Activated CD4-positive, alpha-beta memory T cell treated with anti-CD3 and anti-CD28 coated beads, Interleukin-2, amount 10 ng/mL, durations not matched to agents 7 days and 5 days (primary cell): ENCODE measurements at regions of chrX and their contacts with region 1.

Region 1: DNA sequence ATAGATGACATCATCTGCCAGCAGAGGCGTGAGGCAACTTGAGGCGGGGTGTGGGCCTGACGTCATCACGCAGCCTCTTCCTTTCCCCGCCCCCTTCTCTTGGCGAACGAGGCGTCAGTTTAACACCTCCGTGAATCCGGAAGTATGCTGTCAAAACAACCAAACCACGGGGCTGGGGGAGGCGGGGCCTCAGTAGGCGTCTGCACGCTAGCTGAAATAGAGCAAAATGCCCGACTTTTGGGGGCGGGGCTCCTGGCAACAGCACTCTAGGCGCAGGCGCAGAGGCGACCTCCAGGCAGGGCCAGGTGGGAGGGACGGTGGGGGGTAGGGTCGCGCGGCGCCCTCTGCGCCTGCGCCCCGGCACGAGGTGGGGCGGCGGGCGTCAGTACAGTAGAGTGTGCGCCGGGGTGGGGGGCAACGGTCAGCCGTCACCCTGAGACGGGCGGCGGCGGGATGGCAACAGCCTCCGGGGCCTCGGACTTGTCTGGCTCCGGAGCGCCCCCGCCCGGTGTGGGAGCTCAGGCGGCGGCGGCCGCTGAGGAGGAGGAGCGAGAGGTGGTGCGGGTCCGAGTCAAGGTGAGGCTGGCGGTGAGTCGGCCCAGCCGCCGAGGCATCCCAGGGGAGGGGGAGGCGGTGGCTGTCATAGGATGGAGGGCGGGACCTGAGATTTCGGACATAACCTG is at the start of gene TBC1D25:
- DNase-seq: peak; percentile 97
- H3K4me3 Mint-ChIP-seq: peak within 1 kb of the TSS; percentile 93
- H3K27ac Mint-ChIP-seq: peak within 1 kb of the TSS; percentile 95
- H3K4me1 Mint-ChIP-seq: peaks cover 29% of the 10 kb centered on the region
- H3K27me3 Mint-ChIP-seq: no peaks in the 10 kb centered on the region
- total RNA-seq, gene TBC1D25: 21.7 to 22.3 TPM

Region 2: DNA sequence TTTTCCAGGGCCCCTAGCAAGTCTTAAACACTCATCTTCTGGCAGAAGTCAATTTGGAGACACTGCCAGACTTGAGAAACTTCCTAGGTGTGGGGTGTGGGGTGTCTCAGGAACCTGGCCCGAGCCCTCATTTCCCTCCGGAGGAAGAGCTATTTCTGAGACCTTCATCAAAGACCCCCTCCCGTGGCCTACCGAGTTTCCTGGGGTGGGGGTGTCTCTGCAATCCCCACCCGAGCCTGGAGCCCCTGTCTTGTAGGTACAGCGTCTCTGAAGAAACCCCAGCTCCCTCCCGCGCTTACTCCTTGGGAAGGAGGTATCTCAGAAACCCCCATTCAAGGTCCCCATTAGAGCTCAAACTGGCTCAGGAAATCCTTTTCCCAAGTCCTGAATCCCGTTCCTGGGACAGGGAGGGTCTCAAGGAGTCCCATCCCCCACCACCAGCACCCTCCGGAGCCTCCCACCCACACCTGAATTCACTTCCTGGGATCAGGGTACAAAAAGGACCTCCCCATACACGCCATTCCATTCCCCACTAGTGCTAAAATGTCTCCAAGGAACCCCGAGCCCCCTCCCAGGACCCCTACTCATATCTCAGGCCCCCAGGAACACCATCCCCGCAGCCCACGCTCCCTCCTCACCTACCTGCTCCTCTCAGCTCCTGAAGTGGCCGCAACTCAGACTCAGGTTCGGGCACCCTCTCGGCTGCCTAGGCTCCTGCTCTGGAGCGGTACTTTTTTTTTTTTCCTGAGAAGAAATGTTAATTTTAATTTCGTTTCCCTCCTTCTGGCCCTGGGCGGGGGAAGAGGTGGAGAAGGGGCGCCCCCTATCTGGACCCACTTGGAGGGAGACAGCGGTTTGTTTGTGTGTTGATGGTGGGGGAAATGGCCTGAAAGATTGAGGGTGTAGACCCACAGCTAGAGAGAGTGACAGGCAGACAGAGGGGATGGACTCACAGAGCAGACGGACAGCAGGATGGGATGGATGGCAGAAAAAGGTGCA is 70.5 kb before region 1 on chrX:
- CTCF ChIA-PET with region 1: interaction called, 18 read pairs
- POLR2A ChIA-PET with region 1: interaction called, 12 read pairs
- DNase-seq: peak; percentile 52
- H3K4me3 Mint-ChIP-seq: peak overlapping the region; percentile 96
- H3K27ac Mint-ChIP-seq: peak overlapping the region; percentile 90
- H3K4me1 Mint-ChIP-seq: peaks cover 44% of the 10 kb centered on the region
- H3K27me3 Mint-ChIP-seq: no peaks in the 10 kb centered on the region

Region 3: DNA sequence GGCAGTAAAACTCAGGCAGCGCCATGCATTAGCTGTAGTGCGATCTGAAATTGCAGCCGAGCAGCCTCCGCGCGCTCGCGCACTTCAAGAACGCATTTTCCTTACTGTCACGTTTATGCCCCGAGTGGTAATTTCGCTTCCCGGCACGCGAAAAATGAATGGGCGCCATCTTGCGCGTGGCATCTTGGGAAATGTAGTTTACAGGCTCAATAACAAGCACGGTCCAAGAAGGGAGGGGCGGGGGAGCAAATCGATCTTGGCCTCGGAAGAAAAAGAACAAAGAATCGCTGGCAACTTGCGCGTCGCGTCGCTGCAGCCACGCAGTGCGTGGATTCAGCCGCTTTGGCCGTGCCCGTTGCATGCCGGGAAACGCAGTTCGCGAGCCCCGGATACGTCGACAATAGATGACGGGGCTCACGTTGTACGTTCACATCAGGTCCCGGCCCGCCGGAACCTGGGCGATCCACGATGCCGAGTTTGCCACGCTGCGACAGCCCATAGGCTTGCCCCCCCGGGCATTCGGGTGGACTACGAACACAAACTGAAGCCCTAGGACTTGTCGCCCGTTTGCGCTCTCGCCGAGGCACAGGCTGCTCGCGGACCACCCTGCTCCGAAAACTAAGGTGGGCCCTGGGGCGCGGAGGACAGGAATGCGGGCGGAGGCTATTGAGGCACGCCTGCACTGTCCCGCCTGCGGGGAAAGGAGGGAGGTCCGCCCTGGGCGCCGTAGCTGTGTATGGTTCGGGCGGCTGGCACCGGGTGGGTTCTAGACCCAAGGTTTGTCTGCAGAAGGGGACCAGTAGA is 63.5 kb before region 1 on chrX and contains the start of gene FTSJ1:
- CTCF ChIA-PET with region 1: interaction called, 18 read pairs
- POLR2A ChIA-PET with region 1: interaction called, 12 read pairs
- DNase-seq: peak; percentile 91
- H3K4me3 Mint-ChIP-seq: peak within 1 kb of the TSS; percentile 91
- H3K27ac Mint-ChIP-seq: peak within 1 kb of the TSS; percentile 85
- H3K4me1 Mint-ChIP-seq: peaks cover 37% of the 10 kb centered on the region
- H3K27me3 Mint-ChIP-seq: no peaks in the 10 kb centered on the region
- total RNA-seq, gene FTSJ1: 57.6 to 60.1 TPM

Region 4: DNA sequence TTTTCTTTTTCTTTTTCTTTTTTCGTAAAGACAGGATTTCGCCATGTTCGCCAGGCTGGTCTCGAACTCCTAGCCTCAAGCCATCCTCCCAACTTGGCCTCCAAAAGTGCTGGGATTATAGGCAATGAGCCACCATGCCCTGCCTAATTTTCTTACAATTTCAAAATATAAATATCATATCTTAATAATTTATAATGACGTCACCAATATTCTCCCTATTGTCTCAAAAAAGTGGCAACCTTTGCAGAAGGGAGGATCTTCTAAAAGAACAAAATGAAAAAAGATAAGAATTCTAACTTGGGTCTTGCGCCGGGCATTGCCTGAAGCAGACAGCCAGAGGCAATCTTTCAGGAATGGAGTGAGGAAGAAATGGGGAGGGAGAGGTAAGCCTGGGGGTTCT is 106.2 kb after region 1 on chrX:
- CTCF ChIA-PET with region 1: no interaction called
- POLR2A ChIA-PET with region 1: no interaction called
- DNase-seq: no peak
- H3K4me3 Mint-ChIP-seq: no peak overlapping the region
- H3K27ac Mint-ChIP-seq: no peak overlapping the region
- H3K4me1 Mint-ChIP-seq: peaks cover 2% of the 10 kb centered on the region
- H3K27me3 Mint-ChIP-seq: no peaks in the 10 kb centered on the region